Activated CD4-positive, alpha-beta T cell treated with anti-CD3 and anti-CD28 coated beads, Interleukin-2, amount 10 ng/mL, durations not matched to agents 24 days and 14 days (primary cell): ENCODE measurements at regions of chr4 and their contacts with region 1.

Region 1: GRCh38 chr4:169757575-169758184 is at the start of gene HPF1:
- DNase-seq: peak; percentile 98
- H3K4me3 Mint-ChIP-seq: peak within 1 kb of the TSS; percentile 89
- H3K27ac Mint-ChIP-seq: peak within 1 kb of the TSS; percentile 36
- H3K4me1 Mint-ChIP-seq: peaks cover 20% of the 10 kb centered on the region
- H3K27me3 Mint-ChIP-seq: peaks cover 10% of the 10 kb centered on the region
- total RNA-seq, gene HPF1: 18.8 and 34.0 TPM in 2 replicates

Region 2: DNA sequence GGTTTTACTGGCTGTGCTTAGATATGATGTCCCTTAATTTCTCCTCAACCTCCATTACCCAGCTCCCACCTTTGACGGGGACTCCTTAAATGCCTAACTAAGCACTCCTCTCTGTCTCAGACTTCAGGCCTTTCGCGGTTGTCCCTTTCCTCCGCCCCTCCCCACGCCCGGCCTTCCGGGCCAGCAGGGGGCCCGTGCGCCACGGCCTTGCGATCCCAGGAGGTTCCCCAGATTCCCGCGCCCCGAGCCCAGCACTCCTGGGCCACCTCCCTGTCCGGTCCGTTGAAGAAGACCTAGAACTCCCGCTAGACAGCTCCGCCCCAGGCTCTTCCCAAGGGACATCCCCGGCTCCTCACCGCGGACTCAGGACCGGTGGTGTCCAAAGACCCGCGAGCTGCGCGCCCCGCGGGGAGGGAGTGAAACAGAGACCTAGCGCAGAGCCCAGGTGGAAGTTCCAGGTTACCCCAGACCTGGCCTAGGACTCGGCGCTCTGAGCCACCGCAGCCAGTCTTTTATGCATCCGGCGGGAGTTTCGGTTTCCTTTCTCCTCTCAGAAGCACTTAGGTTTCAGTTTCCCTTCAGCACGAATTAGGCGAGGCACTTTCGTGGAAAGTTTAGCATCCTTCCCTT is 1439.3 kb before region 1 on chr4 and contains the start of gene DDX60:
- intact Hi-C with region 1: loop called (anchors 10 kb)
- DNase-seq: peak; percentile 96
- H3K4me3 Mint-ChIP-seq: peak within 1 kb of the TSS; percentile 83
- H3K27ac Mint-ChIP-seq: peak within 1 kb of the TSS; percentile 96
- H3K4me1 Mint-ChIP-seq: peaks cover 51% of the 10 kb centered on the region
- H3K27me3 Mint-ChIP-seq: no peaks in the 10 kb centered on the region
- total RNA-seq, gene DDX60: 15.2 and 17.6 TPM in 2 replicates

Region 3: GRCh38 chr4:169659716-169660670 is 97.7 kb before region 1 on chr4:
- intact Hi-C with region 1: loop called (anchors 1 kb)
- DNase-seq: peak; percentile 92
- H3K4me3 Mint-ChIP-seq: peak overlapping the region; percentile 88
- H3K27ac Mint-ChIP-seq: peak overlapping the region; percentile 96
- H3K4me1 Mint-ChIP-seq: peaks cover 16% of the 10 kb centered on the region
- H3K27me3 Mint-ChIP-seq: no peaks in the 10 kb centered on the region

Region 4: DNA sequence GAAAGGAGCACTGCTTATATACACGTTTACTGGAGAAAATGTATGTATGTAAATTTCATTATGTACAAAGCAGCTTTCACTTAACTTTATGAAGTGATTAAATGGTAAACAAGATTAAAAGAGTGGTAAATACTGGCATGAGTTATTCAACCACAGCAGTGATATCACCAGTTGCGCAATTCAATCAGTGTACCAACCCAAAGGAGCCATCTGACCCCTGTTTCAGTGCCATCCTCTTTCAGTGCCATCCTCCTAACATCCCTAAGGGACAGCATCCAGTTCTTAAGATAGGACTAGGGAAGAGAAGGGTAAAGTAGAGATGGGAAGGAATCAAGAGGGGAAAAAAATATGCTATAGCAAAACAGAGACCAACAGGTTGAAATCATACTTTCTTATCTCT is 16.1 kb before region 1 on chr4:
- intact Hi-C with region 1: loop called (anchors 2 kb)
- DNase-seq: no peak
- H3K4me3 Mint-ChIP-seq: no peak overlapping the region
- H3K27ac Mint-ChIP-seq: no peak overlapping the region
- H3K4me1 Mint-ChIP-seq: peaks cover 2% of the 10 kb centered on the region
- H3K27me3 Mint-ChIP-seq: no peaks in the 10 kb centered on the region

Region 5: DNA sequence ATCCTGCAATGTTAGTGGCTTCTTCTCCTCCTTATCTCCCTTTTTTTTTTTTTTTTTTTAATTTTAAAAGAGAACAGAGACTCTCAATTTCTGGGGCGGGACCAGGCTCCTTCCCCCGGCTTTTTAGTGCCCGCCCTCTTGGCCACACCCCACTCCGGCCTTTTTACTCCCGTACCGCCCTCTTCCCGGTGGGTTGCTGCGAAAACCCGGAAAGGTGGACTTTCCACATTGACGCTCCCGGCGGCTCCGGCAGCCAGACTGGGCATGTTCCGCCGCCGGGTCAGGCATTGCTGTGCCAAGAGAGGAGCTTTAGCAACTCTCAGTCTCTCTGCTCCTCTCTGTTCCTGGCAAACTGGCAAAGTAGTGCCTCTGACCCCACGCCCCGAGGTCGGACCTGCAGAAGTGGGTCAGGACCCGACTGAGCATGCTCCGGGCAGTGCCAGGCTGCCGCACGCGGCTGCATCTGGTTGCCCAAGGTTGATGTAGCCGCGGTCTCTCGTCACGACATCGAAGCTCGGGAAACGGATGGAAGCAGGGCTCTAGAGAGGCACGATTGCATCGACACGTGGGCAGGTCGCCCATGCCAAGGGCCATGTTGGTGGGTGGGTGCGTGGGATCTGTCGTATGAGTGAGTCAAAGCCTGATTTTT is 269.6 kb after region 1 on chr4:
- intact Hi-C with region 1: loop called (anchors 1 kb)
- DNase-seq: peak; percentile 96
- H3K4me3 Mint-ChIP-seq: peak overlapping the region; percentile 89
- H3K27ac Mint-ChIP-seq: peak overlapping the region; percentile 76
- H3K4me1 Mint-ChIP-seq: peaks cover 10% of the 10 kb centered on the region
- H3K27me3 Mint-ChIP-seq: peaks cover 67% of the 10 kb centered on the region